Mammary epithelial cell (primary cell): ENCODE measurements at regions of chr13 and their contacts with region 1.

Region 1: DNA sequence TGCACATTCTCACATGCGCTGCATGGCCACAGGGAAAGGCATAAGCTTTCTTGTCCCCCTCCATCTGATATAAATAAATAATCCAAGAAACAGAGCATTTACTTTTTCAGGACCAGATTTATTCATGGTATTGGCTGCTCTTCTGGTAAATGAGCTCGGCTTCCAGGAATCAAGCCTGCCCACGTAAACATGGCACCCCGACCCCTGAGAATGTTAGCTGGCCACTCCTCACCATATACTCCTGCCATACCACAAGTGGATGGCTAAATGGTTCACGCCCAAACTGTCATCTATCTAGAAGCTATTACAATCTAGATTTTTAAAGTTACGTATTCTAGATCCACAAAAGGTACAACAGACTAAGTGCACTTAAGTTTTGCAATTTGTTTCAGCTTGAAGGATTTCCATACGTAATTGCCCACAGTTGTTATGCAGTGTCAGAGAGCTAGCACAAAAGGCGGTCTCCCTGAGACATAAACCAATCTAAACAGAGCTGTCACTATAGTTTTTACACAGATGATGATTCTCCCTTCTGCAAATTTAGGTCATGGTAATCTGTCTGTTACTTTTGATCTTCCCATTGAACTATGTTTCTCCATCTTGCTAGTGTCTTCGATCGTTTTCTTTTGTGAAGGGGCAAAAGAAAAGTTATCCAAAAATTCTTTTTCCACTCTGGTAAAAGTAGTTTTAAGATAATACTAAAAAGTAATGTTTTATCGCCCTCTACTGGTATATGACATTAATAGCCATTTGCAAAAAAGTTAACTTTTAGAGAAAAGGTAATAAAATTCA is 16.2 kb upstream of the FOXO1 start:
- DNase-seq: no peak
- H3K4me3 ChIP-seq: no peak overlapping the region
- H3K27ac ChIP-seq: no peak overlapping the region
- H3K4me1 ChIP-seq: no peaks in the 10 kb centered on the region
- H3K27me3 ChIP-seq: no peaks in the 10 kb centered on the region
- CTCF ChIP-seq: peak; percentile 45 to 47

Region 2: GRCh38 chr13:39676315-39676876 is 1006.2 kb before region 1 on chr13:
- CTCF ChIA-PET with region 1: no interaction called
- dilution Hi-C with region 1: no loop called
- in situ Hi-C with region 1: loop called (anchors 25 kb)
- intact Hi-C with region 1: no loop called
- DNase-seq: peak; percentile 21
- H3K4me3 ChIP-seq: no peak overlapping the region
- H3K27ac ChIP-seq: no peak overlapping the region
- H3K4me1 ChIP-seq: no peaks in the 10 kb centered on the region
- H3K27me3 ChIP-seq: no peaks in the 10 kb centered on the region
- CTCF ChIP-seq: peak; percentile 35 to 42

Region 3: DNA sequence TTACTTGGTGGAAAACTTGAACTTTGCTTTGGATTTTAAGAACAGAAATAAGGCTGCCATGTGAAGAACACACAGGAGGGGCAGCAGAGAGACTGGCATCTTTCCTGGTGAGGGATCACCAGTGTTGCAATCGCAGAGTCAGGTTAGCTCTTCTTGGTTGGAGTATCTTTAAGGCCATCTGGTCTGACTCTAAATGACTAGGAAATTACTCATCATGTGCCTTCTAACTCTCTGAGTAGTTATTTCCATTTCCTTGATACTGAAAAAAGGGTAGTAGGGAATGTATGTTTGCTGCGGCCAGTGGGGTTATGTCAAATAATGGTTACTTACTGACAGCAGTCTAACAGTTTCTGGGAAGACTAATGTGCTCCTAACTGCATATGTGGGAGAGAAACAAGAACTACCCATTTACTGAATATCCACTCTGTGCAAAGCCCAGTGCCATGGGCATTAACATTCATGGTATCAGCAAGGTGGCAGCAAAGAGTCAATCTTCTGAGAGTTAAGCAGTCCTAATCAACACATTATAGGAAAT is 905.1 kb before region 1 on chr13:
- CTCF ChIA-PET with region 1: no interaction called
- dilution Hi-C with region 1: no loop called
- in situ Hi-C with region 1: loop called (anchors 10 to 25 kb)
- intact Hi-C with region 1: loop called (anchors 5 kb)
- DNase-seq: peak; percentile 92
- H3K4me3 ChIP-seq: no peak overlapping the region
- H3K27ac ChIP-seq: no peak overlapping the region
- H3K4me1 ChIP-seq: peaks cover 15% of the 10 kb centered on the region
- H3K27me3 ChIP-seq: no peaks in the 10 kb centered on the region
- CTCF ChIP-seq: peak; percentile 56 to 69

Region 4: DNA sequence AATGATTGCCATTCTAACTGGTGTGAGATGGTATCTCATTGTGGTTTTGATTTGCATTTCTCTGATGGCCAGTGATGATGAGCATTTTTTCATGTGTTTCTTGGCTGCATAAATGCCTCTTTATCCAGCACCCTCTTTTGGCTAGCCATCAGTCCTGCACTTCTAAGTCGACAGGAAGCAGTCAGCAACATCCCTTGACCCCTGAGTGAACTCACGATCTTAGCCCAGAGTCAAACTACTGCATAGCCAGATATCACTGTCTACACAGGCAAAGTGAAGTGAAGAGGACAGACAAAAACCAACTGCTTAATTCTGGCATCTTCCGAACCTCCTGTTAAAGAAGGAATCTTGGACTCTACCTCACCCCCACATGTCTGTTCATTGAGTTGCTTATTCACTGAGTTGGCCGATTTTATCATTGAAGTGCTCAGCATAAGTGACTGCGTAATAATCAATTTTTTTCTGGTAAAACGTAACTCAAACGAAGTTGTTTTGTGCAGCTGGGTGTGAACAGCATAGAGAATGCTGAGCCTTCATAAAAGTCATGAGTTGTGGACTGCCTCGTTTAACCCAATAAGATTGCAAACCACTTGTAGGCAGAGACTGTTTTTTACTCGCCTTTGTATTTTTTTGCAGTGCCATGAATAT is 723.0 kb before region 1 on chr13:
- CTCF ChIA-PET with region 1: no interaction called
- dilution Hi-C with region 1: loop called (anchors 10 kb)
- in situ Hi-C with region 1: no loop called
- intact Hi-C with region 1: no loop called
- DNase-seq: no peak
- H3K4me3 ChIP-seq: no peak overlapping the region
- H3K27ac ChIP-seq: no peak overlapping the region
- H3K4me1 ChIP-seq: no peaks in the 10 kb centered on the region
- H3K27me3 ChIP-seq: no peaks in the 10 kb centered on the region
- CTCF ChIP-seq: no peak

Region 5: DNA sequence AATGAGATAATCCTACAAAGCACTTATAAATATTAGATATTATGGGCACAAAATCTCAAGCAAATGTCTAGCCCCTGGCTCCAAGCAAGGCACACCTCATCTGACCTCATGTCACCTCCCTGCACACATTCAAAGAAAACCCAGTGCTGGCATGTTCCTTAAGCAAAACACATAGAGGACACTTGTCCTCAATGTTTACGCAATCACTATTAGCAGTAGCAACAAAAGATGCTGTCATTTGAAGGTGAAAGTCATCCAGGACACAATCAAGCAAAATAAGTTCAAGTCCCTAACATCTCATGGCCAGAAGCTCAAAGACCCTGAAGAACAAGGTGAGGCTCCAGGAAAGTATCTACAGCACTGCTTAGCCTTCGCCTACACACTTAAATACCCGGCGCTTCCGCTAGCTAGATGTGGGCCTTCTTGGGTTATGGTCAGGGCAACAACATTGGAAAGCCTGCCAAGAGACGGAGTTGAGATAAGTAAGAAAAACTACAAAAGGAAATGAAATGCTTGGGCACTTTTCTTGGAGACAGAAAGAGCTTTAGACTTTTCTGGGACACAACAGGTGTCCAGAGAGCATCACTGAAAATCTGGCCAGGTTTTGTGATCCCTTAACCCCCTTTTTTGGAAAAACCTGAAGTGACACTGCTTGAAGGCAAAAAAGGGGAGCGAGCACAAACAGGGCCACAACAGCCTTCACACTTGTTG is 101.9 kb before region 1 on chr13:
- CTCF ChIA-PET with region 1: no interaction called
- dilution Hi-C with region 1: loop called (anchors 5 kb)
- in situ Hi-C with region 1: no loop called
- intact Hi-C with region 1: no loop called
- DNase-seq: no peak
- H3K4me3 ChIP-seq: no peak overlapping the region
- H3K27ac ChIP-seq: no peak overlapping the region
- H3K4me1 ChIP-seq: no peaks in the 10 kb centered on the region
- H3K27me3 ChIP-seq: no peaks in the 10 kb centered on the region
- CTCF ChIP-seq: no peak

Region 6: DNA sequence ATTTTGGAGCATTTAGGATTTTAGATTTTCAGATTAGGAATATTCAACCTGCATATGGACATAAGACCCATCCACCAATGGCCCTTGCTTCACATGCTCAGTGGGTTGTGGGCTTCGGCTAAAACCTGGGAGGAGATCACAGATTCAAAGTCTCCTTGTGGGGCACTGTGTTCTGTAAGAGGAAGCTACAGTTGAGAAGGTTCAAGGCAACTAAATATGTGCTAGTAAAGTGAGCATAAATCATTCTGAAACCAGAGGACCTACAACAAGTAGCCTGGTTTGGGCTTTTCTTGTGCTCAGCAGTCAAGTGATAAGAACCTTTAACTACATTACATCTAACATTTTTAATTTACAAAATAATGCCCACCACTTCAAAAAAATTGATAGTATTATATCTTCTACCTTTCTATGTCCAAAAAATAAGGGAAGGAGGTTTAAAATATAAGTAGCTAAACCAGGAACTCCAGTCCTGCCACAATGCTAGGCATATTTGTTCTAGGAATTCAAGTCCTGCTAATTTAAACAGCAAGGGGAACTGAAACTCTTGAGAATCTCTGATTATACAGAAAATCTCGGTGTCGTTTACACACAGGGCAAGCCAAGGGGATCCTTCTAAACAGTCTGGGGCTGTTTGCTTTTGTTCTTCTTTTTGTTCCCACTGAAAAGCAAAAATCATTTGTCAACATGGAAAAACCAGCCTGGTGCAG is 52.8 kb before region 1 on chr13:
- CTCF ChIA-PET with region 1: no interaction called
- dilution Hi-C with region 1: no loop called
- in situ Hi-C with region 1: no loop called
- intact Hi-C with region 1: no loop called
- DNase-seq: no peak
- H3K4me3 ChIP-seq: no peak overlapping the region
- H3K27ac ChIP-seq: no peak overlapping the region
- H3K4me1 ChIP-seq: no peaks in the 10 kb centered on the region
- H3K27me3 ChIP-seq: no peaks in the 10 kb centered on the region
- CTCF ChIP-seq: no peak

Region 7: GRCh38 chr13:40863723-40864122 is 181.1 kb after region 1 on chr13:
- CTCF ChIA-PET with region 1: no interaction called
- dilution Hi-C with region 1: no loop called
- in situ Hi-C with region 1: no loop called
- intact Hi-C with region 1: no loop called
- DNase-seq: no peak
- H3K4me3 ChIP-seq: no peak overlapping the region
- H3K27ac ChIP-seq: no peak overlapping the region
- H3K4me1 ChIP-seq: no peaks in the 10 kb centered on the region
- H3K27me3 ChIP-seq: no peaks in the 10 kb centered on the region
- CTCF ChIP-seq: no peak